Posterior vena cava (tissue), 2 donors: ENCODE measurements at regions of chr7 and their contacts with region 1.

Region 1: DNA sequence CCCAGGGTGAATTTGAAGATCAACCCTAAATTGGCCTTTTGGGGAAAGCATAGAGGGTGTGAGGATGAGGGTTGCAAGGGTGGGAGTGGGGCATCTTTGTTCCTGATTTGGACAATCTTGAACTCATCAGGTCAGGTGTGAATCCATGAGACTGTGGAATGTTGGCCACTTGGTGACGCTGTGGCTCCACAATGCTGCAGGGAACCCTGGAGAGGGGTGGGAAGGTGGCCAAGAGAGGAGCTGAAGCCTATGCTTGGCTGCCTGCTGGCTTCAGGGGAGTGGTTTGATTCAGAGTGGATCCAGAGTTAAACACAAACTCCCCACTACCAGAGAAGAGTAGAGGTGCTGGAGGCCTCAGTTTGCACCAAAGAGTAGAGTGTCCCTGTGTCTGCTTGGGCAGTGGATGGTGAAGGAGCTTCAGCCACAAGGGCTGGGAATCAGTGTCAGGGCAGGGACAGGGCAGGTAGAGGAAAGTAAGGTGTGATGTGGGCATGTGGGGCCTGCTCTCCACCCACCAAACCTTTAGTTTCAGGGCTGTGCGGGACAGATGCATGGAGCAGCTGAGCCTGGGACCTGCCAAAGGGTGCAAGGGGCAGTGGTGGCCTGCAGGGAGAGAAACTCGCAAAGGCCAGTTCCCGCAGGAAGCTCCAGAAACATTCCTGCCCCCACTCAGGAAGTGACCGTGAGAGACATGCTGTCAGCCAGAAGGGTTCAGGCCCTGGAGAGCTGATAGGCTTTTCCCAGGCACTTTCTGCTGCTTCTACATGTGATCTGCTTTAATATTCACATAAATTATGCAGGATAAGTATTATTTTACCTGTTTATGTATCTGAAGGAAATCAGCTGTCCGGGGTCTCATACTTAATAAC is 81.0 kb upstream of the PRSS58 start:
- DNase-seq: no peak

Region 2: GRCh38 chr7:141600168-141601006 is 738.5 kb before region 1 on chr7:
- intact Hi-C with region 1: no loop called
- DNase-seq: no peak

Region 3: DNA sequence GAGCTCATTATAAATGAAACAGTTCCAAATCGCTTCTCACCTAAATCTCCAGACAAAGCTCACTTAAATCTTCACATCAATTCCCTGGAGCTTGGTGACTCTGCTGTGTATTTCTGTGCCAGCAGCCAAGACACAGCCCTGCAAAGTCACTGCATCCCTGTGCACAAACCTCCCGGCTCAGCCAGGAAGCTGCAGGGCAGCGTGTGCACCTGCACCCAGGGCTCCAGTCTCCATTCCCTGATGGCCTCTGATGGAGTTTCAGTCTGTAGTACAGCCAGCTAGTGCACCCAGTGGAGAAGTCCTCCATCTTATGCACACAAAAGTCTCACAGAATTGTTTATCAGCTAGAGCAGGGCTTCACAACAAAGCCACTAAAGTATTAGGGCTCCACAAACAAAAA is 29.9 kb before region 1 on chr7:
- intact Hi-C with region 1: loop called in 1 of 2 experiments (anchors 1 kb)
- DNase-seq: no peak